ENCODE measurements at regions of chr7 and their contacts with region 1.

Region 1: GRCh38 chr7:101688183-101688831 is 59.2 kb upstream of the MYL10 start:
- DNase-seq: peak; percentile 55 to 86 (median 77)
- H3K4me3 ChIP-seq: peak overlapping the region in 1 of 4 donors; percentile 46
- H3K27ac ChIP-seq: peak overlapping the region in 2 of 5 donors; percentile 0 to 42
- H3K4me1 ChIP-seq: peaks cover 8 to 11% of the 10 kb centered on the region in 2 donors
- H3K27me3 ChIP-seq: no peaks in the 10 kb centered on the region
- CTCF ChIP-seq: peak; percentile 81 to 97 (median 92)
- POLR2A ChIP-seq: no peak

Region 2: GRCh38 chr7:101558742-101559325 is 129.5 kb before region 1 on chr7:
- intact Hi-C with region 1: no loop called
- DNase-seq: peak in 2 of 7 donors; percentile 15 to 37
- H3K4me3 ChIP-seq: no peak overlapping the region
- H3K27ac ChIP-seq: no peak overlapping the region
- H3K4me1 ChIP-seq: no peaks in the 10 kb centered on the region
- H3K27me3 ChIP-seq: no peaks in the 10 kb centered on the region
- CTCF ChIP-seq: no peak
- POLR2A ChIP-seq: no peak

Region 3: GRCh38 chr7:101602484-101603241 is 85.6 kb before region 1 on chr7:
- intact Hi-C with region 1: loop called (anchors 5 to 10 kb)
- DNase-seq: peak; percentile 62 to 85 (median 79)
- H3K4me3 ChIP-seq: no peak overlapping the region
- H3K27ac ChIP-seq: no peak overlapping the region
- H3K4me1 ChIP-seq: no peaks in the 10 kb centered on the region
- H3K27me3 ChIP-seq: no peaks in the 10 kb centered on the region
- CTCF ChIP-seq: peak; percentile 74 to 91 (median 82)
- POLR2A ChIP-seq: no peak

Region 4: DNA sequence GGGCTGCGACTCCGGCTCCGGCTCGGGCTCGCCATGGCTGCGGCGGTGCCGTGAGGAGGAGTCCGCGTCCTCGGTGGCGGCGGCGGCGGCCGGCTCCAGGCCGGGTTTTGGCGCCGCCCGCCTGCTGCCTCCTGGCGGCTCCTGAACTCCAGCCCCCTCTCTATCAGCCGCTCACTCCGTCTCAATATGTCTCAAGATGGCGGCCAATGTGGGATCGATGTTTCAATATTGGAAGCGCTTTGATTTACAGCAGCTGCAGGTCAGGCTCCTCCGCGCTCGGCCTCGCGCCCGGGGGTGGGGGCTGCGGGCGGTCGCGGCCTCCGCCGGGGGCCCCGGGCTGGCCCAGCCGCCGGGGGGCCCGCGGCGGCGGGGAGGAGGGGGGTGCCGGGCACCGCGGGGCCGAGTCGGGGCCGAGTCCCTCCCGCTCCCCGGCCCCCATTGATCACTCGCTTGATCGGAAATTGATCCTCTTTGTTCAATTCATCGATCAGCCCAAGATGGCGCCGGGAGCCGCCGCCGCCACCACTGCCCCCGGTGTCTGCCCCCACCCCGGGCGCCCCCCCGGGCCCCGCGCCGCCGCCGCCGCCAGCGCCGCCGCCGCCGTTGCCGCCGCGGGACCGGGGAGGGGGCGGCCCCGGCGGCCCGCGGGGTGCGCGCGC is 127.7 kb after region 1 on chr7:
- intact Hi-C with region 1: loop called (anchors 5 kb)
- DNase-seq: peak; percentile 66 to 84 (median 75)
- H3K4me3 ChIP-seq: peak overlapping the region in 2 of 4 donors; percentile 31 to 86
- H3K27ac ChIP-seq: peak overlapping the region in 3 of 5 donors; percentile 59 to 90 (median 78)
- H3K4me1 ChIP-seq: peaks cover 0 to 9% of the 10 kb centered on the region in 2 donors
- H3K27me3 ChIP-seq: no peaks in the 10 kb centered on the region
- CTCF ChIP-seq: peak in 1 of 6 experiments; percentile 40
- POLR2A ChIP-seq: peak in 1 of 2 donors; percentile 52

Region 5: GRCh38 chr7:102236592-102237287 is 548.4 kb after region 1 on chr7:
- intact Hi-C with region 1: loop called (anchors 2 to 10 kb)
- DNase-seq: peak; percentile 43 to 83 (median 69)
- H3K4me3 ChIP-seq: no peak overlapping the region
- H3K27ac ChIP-seq: no peak overlapping the region
- H3K4me1 ChIP-seq: no peaks in the 10 kb centered on the region
- H3K27me3 ChIP-seq: no peaks in the 10 kb centered on the region
- CTCF ChIP-seq: peak; percentile 69 to 84 (median 77)
- POLR2A ChIP-seq: no peak

Region 6: DNA sequence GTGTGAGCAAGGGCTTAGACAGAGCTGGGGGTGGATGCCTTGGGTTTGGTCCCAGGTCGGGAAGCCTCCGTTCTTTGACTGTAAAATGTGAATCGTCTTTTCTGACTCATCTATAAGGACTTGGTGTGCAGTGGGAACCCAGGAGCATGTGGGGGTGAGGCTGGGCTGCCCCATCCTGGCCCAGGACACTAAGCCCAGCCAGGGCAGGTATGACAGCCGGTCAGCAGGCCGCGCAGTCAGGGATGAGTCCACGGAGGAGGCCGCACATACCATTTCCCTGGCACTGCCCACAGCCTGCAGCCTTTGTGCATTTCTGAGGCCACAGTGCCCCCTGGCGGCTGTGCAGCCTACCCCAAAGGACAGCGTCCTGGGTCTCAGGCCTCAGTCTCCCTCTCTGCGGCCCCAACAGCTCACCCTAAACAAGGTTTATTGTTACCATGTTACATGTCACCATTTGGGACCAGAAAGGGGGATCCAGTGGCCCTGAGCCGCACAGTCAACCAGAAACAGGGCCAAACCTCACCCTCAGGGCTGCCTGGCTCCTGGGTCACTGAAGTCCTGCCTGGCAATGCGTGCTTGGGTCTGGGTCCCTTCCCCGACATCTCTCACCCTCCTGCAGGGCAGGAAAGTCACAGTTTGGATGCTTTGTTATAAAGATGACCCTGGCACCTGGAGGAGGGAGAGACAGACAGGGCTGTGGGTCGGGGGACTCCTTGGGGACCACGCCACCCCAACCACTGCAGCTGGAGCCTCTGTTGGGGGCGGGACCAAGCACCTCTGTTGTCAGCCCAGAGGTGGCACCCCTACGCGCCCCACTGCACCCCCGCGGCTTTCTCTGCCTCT is 584.0 kb after region 1 on chr7:
- intact Hi-C with region 1: loop called (anchors 5 to 10 kb)
- DNase-seq: peak; percentile 77 to 92 (median 85)
- H3K4me3 ChIP-seq: no peak overlapping the region
- H3K27ac ChIP-seq: no peak overlapping the region
- H3K4me1 ChIP-seq: peaks cover 0 to 4% of the 10 kb centered on the region in 2 donors
- H3K27me3 ChIP-seq: no peaks in the 10 kb centered on the region
- CTCF ChIP-seq: peak; percentile 85 to 94 (median 93)
- POLR2A ChIP-seq: no peak

Region 7: GRCh38 chr7:102279537-102280400 is 591.5 kb after region 1 on chr7:
- intact Hi-C with region 1: loop called (anchors 5 to 10 kb)
- DNase-seq: peak in 4 of 7 donors; percentile 41 to 56 (median 46)
- H3K4me3 ChIP-seq: no peak overlapping the region
- H3K27ac ChIP-seq: no peak overlapping the region
- H3K4me1 ChIP-seq: peaks cover 0 to 5% of the 10 kb centered on the region in 2 donors
- H3K27me3 ChIP-seq: no peaks in the 10 kb centered on the region
- CTCF ChIP-seq: peak; percentile 57 to 89 (median 77)
- POLR2A ChIP-seq: no peak

Measured in adrenal gland (tissue), 19 donors.